Transverse colon (tissue), 4 donors: ENCODE measurements at regions of chr17 and their contacts with region 1.

Region 1: DNA sequence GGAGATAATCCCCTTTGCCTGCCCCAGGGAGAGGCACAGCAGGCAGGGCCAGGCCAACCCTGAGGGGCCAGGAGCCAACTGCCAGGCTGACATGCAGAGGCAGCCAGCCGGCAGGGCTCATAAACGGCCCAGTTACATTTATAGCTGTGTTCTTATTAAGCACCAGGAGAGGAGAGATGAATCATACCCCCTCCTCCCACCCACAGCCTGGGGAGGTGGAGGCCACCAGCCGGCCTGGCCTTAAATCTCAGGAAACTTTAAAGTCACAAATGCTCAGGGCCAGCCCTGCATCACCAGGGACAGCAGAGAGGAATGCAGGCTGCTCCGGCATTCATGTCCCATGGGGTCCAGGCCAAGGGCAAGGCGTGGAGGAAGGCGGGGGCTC is 177.2 kb downstream of the TMEM132E start:
- DNase-seq: no peak
- H3K4me3 ChIP-seq: no peak overlapping the region
- H3K27ac ChIP-seq: no peak overlapping the region
- H3K4me1 ChIP-seq: no peaks in the 10 kb centered on the region
- H3K27me3 ChIP-seq: no peaks in the 10 kb centered on the region
- CTCF ChIP-seq: no peak
- EP300 ChIP-seq: no peak
- POLR2A ChIP-seq: no peak

Region 2: GRCh38 chr17:34781571-34782108 is 25.0 kb after region 1 on chr17:
- in situ Hi-C with region 1: no loop called
- intact Hi-C with region 1: no loop called
- DNase-seq: no peak
- H3K4me3 ChIP-seq: no peak overlapping the region
- H3K27ac ChIP-seq: no peak overlapping the region
- H3K4me1 ChIP-seq: no peaks in the 10 kb centered on the region
- H3K27me3 ChIP-seq: no peaks in the 10 kb centered on the region
- CTCF ChIP-seq: no peak
- EP300 ChIP-seq: no peak
- POLR2A ChIP-seq: no peak

Region 3: DNA sequence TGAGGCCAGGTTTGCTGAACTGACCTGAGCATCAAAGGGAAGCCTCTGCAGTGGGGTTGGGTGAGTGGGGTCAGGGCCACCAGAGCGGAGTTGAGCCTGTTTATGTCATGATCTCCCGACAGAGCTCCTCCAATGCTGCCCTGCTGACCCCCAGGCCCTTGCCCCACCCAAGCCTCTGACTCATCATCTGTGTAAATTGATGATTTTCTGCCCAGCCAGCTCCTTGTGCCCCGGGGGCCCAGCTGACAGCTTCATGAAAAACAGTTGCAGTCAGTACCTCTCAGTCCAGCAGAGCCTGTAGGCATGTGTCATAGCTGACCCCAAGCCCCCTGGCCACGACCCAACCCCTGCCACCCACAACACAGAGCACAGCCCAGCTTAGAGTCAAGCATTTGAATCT is 69.7 kb after region 1 on chr17:
- in situ Hi-C with region 1: no loop called
- intact Hi-C with region 1: no loop called
- DNase-seq: no peak
- H3K4me3 ChIP-seq: no peak overlapping the region
- H3K27ac ChIP-seq: no peak overlapping the region
- H3K4me1 ChIP-seq: no peaks in the 10 kb centered on the region
- H3K27me3 ChIP-seq: no peaks in the 10 kb centered on the region
- CTCF ChIP-seq: no peak
- EP300 ChIP-seq: no peak
- POLR2A ChIP-seq: no peak

Region 4: DNA sequence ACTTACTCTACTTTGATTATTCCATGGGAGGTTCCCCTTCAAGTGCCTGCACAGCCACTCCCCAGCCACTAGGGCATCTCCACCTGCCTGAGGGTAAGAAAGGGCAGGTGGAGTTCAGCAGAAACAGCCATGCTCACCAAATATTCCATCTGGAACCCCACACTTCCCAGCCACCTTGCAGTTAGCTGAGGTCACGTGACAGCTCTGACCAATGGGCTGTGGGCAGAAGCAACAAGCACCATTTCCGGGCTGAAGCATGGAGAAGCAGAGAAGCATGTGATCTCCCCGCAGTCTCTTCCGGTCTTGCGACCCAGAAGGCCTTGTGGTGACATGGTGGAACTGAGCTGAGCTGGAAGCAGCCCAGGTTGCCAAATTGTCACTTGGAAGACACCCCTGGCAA is 96.0 kb after region 1 on chr17:
- in situ Hi-C with region 1: loop called in 1 of 4 experiments (anchors 25 kb)
- intact Hi-C with region 1: no loop called
- DNase-seq: no peak
- H3K4me3 ChIP-seq: no peak overlapping the region
- H3K27ac ChIP-seq: no peak overlapping the region
- H3K4me1 ChIP-seq: no peaks in the 10 kb centered on the region
- H3K27me3 ChIP-seq: no peaks in the 10 kb centered on the region
- CTCF ChIP-seq: no peak
- EP300 ChIP-seq: no peak
- POLR2A ChIP-seq: no peak